ENCODE measurements at regions of chr19 and their contacts with region 1.

Region 1: DNA sequence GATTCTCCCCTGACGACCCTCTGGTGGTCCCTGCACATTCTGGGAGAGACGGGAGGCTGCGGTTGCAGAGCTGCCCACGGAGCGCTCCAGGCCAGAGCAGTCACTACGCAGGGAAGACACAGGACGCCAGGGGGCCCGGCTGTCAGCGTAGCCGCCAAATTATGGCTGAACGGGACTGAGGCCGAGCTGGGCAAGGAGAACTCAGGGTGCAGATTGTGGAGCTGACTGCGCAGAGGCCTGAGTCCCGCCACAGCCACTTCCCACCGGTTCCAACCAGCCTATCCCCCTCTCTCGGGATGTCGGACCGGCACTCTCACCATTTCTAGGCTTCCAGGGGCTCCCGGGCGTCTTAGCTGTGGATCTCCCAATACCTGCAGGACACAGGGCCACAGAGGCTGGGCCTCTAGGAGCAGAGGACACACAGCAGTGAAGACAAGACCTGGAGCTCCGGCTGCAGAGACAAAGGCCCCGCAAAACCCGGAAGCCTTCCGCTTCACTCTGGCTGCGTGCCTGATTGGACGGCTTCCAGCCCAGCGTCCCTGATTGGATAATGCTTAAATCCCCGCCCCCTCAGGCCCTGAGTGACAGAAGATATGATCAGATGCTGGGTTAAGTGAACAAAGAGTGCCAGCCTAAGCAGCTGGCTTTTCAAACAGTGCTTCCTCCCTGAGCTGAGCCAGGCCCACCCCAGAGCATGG is at the start of gene ZNF737:
- DNase-seq: peak; percentile 91
- H3K4me3 Mint-ChIP-seq: peak within 1 kb of the TSS; percentile 98
- H3K27ac Mint-ChIP-seq: peak within 1 kb of the TSS; percentile 93
- H3K4me1 Mint-ChIP-seq: peaks cover 20% of the 10 kb centered on the region
- H3K27me3 Mint-ChIP-seq: no peaks in the 10 kb centered on the region
- total RNA-seq, gene ZNF737: 10.4 to 11.7 TPM

Region 2: GRCh38 chr19:20237761-20238623 is 327.5 kb before region 1 on chr19:
- CTCF ChIA-PET with region 1: interaction called, 5 read pairs
- POLR2A ChIA-PET with region 1: interaction called, 10 read pairs
- DNase-seq: peak; percentile 88
- H3K4me3 Mint-ChIP-seq: peak overlapping the region; percentile 87
- H3K27ac Mint-ChIP-seq: peak overlapping the region; percentile 82
- H3K4me1 Mint-ChIP-seq: peaks cover 10% of the 10 kb centered on the region
- H3K27me3 Mint-ChIP-seq: no peaks in the 10 kb centered on the region

Region 3: GRCh38 chr19:20661150-20661819 is 95.8 kb after region 1 on chr19 and contains the start of gene ZNF626:
- CTCF ChIA-PET with region 1: interaction called, 5 read pairs
- POLR2A ChIA-PET with region 1: interaction called, 44 read pairs
- DNase-seq: peak; percentile 92
- H3K4me3 Mint-ChIP-seq: peak within 1 kb of the TSS; percentile 88
- H3K27ac Mint-ChIP-seq: peak within 1 kb of the TSS; percentile 84
- H3K4me1 Mint-ChIP-seq: peaks cover 23% of the 10 kb centered on the region
- H3K27me3 Mint-ChIP-seq: no peaks in the 10 kb centered on the region
- total RNA-seq, gene ZNF626: 7.6 to 8.5 TPM